Stomach (tissue), 19 donors: ENCODE measurements at regions of chr17 and their contacts with region 1.

Region 1: GRCh38 chr17:38560508-38561318 is 45.0 kb downstream of the SRCIN1 start:
- DNase-seq: peak in 1 of 2 donors; percentile 66
- H3K4me3 ChIP-seq: no peak overlapping the region
- H3K27ac ChIP-seq: no peak overlapping the region
- H3K4me1 ChIP-seq: peaks cover 29 to 61% (median 35%) of the 10 kb centered on the region in 4 donors
- H3K27me3 ChIP-seq: peaks cover 20 to 88% (median 58%) of the 10 kb centered on the region in 3 donors
- CTCF ChIP-seq: no peak
- EP300 ChIP-seq: no peak
- POLR2A ChIP-seq: no peak

Region 2: GRCh38 chr17:38667099-38667786 is 106.5 kb after region 1 on chr17:
- intact Hi-C with region 1: loop called (anchors 10 kb)
- DNase-seq: peak; percentile 70 to 88
- H3K4me3 ChIP-seq: no peak overlapping the region
- H3K27ac ChIP-seq: no peak overlapping the region
- H3K4me1 ChIP-seq: peaks cover 0 to 9% (median 0%) of the 10 kb centered on the region in 4 donors
- H3K27me3 ChIP-seq: peaks cover 0 to 53% (median 32%) of the 10 kb centered on the region in 3 donors
- CTCF ChIP-seq: peak in 5 of 7 experiments; percentile 96 to 98 (median 97)
- EP300 ChIP-seq: no peak
- POLR2A ChIP-seq: no peak